ENCODE measurements at regions of chr2 and their contacts with region 1.

Region 1: DNA sequence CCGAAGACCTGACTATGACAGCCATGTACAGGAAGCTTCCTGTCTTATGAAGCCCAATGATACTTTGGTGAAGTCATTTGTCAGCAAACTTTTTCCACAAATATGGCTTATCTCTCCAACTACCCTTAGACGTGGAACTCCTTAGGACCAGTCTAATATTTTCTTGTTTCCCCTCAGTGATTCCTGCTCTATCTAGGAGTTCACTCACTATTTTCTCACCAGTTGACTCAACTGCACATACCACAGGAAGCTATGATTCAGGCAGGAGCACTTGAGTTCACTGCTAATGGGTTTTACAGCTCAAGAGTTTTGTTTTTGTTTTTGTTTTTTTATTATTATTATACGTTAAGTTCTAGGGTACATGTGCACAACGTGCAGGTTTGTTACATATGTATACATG is 109.3 kb downstream of the ANTXR1 start:
- DNase-seq: peak; percentile 53
- H3K4me3 ChIP-seq: no peak overlapping the region
- H3K27ac ChIP-seq: no peak overlapping the region
- H3K4me1 ChIP-seq: peaks cover 13% of the 10 kb centered on the region
- H3K27me3 ChIP-seq: no peaks in the 10 kb centered on the region
- CTCF ChIP-seq: no peak

Region 2: DNA sequence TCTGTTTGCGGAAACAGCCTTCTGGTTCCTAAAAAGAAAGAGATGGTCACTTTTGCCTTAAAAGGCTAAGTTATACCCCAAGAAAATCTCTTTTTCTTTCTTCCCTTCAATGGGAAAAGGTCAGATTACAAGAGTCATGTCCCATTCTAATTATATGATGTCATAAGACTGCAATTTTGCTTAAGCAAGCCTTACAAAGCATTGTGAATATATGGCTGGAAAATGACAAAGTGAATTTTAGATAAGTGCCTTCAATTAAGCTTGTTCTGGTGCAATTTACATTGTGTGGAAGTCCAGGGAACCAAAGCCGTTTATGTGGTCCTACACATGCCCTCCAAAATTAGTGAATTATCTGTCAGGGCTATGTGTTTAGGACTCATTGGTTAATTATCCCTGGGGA is 243.5 kb before region 1 on chr2:
- CTCF ChIA-PET with region 1: no interaction called
- dilution Hi-C with region 1: no loop called
- in situ Hi-C with region 1: no loop called
- intact Hi-C with region 1: no loop called
- DNase-seq: no peak
- H3K4me3 ChIP-seq: no peak overlapping the region
- H3K27ac ChIP-seq: no peak overlapping the region
- H3K4me1 ChIP-seq: no peaks in the 10 kb centered on the region
- H3K27me3 ChIP-seq: peaks cover 2% of the 10 kb centered on the region
- CTCF ChIP-seq: no peak

Region 3: DNA sequence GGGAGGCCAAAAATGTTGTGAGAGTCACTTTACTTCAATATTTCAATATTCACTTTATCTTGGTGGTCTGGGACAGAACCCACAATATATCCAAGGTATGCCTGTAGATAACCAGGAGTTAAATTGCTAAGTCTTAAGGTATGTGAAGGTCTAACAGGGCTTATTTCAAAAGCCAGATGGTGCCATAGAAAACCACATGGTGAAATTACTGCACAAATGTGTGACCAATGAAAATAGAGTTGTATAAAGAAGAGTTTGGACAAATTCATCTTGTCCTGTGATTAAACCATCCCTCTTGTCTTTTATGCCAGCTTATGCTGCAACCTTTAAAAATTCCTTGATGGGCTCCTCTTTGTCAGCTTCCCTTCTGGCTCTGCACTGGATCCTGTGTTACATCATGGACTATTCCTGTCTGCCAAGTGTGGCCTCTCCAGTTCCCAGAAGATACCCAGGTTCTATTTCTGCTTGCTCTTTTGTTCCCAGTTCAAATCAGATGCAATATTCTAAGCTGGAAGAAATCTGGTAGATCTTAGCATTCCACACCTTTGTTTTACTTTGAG is 62.5 kb before region 1 on chr2:
- CTCF ChIA-PET with region 1: no interaction called
- dilution Hi-C with region 1: loop called (anchors 5 kb)
- in situ Hi-C with region 1: no loop called
- intact Hi-C with region 1: no loop called
- DNase-seq: no peak
- H3K4me3 ChIP-seq: no peak overlapping the region
- H3K27ac ChIP-seq: no peak overlapping the region
- H3K4me1 ChIP-seq: peaks cover 13% of the 10 kb centered on the region
- H3K27me3 ChIP-seq: no peaks in the 10 kb centered on the region
- CTCF ChIP-seq: no peak